CD8-positive, alpha-beta T cell (primary cell): ENCODE measurements at regions of chr17 and their contacts with region 1.

Region 1: GRCh38 chr17:31842183-31843069 is 16.6 kb downstream of the COPRS start:
- DNase-seq: peak; percentile 28 to 79 (median 59)
- ATAC-seq: peak; percentile 95
- H3K4me3 ChIP-seq: no peak overlapping the region
- H3K4me3 Mint-ChIP-seq: no peak overlapping the region
- H3K27ac ChIP-seq: no peak overlapping the region
- H3K27ac Mint-ChIP-seq: no peak overlapping the region
- H3K4me1 ChIP-seq: no peaks in the 10 kb centered on the region
- H3K4me1 Mint-ChIP-seq: no peaks in the 10 kb centered on the region
- H3K27me3 ChIP-seq: peaks cover 0 to 6% of the 10 kb centered on the region in 2 experiments
- H3K27me3 Mint-ChIP-seq: peaks cover 9% of the 10 kb centered on the region
- CTCF ChIP-seq: peak; percentile 94

Region 2: GRCh38 chr17:31373150-31374093 is 469.0 kb before region 1 on chr17:
- CTCF ChIA-PET with region 1: interaction called, 3 read pairs
- POLR2A ChIA-PET with region 1: no interaction called
- intact Hi-C with region 1: loop called in 1 of 2 experiments (anchors 5 kb)
- DNase-seq: peak in 3 of 9 experiments; percentile 29 to 76 (median 65)
- ATAC-seq: peak; percentile 84
- H3K4me3 ChIP-seq: no peak overlapping the region
- H3K4me3 Mint-ChIP-seq: no peak overlapping the region
- H3K27ac ChIP-seq: no peak overlapping the region
- H3K27ac Mint-ChIP-seq: no peak overlapping the region
- H3K4me1 ChIP-seq: no peaks in the 10 kb centered on the region
- H3K4me1 Mint-ChIP-seq: peaks cover 14% of the 10 kb centered on the region
- H3K27me3 ChIP-seq: no peaks in the 10 kb centered on the region
- H3K27me3 Mint-ChIP-seq: no peaks in the 10 kb centered on the region
- CTCF ChIP-seq: peak; percentile 91

Region 3: DNA sequence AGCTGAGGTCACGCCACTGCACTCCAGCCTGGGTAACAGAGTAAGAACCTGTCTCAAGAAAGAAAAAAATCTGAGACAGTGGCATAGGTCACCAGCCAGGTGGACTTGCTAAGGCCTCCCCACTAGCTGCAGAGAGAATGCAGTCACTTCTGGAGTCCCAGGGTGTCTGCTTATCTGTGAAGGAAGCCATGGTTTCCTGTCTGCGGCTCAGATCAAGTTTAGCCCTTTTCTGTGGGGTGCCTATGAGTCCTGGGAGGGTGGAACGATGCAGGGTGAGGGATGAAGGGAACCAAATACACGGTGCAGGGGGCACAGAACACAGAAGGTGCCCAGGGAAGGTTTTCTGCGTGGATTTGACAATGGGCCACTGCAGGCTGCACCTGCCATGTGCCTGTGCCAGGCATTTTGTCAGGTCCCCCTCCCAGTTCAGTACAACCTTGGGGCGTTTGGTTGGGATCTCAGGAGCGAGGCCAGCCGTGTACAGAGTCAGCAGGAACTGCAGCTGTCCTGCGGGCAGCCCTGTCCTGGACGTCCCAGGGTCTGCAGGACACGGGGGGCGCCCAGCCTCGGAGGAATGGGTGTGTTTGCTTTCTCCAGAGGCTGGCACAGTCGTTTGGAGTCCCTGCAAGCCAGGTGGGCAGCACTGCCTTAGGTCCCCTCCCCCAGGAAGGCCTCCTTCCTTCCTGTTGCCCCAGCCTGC is 409.2 kb before region 1 on chr17:
- CTCF ChIA-PET with region 1: interaction called, 34 read pairs
- POLR2A ChIA-PET with region 1: interaction called, 3 read pairs
- intact Hi-C with region 1: loop called in 1 of 2 experiments (anchors 1 kb)
- DNase-seq: peak; percentile 20 to 71 (median 55)
- ATAC-seq: peak; percentile 89
- H3K4me3 ChIP-seq: no peak overlapping the region
- H3K4me3 Mint-ChIP-seq: peak overlapping the region; percentile 62
- H3K27ac ChIP-seq: no peak overlapping the region
- H3K27ac Mint-ChIP-seq: peak overlapping the region; percentile 33
- H3K4me1 ChIP-seq: peaks cover 16% of the 10 kb centered on the region
- H3K4me1 Mint-ChIP-seq: peaks cover 20% of the 10 kb centered on the region
- H3K27me3 ChIP-seq: peaks cover 0 to 2% of the 10 kb centered on the region in 2 experiments
- H3K27me3 Mint-ChIP-seq: peaks cover 13% of the 10 kb centered on the region
- CTCF ChIP-seq: no peak

Region 4: DNA sequence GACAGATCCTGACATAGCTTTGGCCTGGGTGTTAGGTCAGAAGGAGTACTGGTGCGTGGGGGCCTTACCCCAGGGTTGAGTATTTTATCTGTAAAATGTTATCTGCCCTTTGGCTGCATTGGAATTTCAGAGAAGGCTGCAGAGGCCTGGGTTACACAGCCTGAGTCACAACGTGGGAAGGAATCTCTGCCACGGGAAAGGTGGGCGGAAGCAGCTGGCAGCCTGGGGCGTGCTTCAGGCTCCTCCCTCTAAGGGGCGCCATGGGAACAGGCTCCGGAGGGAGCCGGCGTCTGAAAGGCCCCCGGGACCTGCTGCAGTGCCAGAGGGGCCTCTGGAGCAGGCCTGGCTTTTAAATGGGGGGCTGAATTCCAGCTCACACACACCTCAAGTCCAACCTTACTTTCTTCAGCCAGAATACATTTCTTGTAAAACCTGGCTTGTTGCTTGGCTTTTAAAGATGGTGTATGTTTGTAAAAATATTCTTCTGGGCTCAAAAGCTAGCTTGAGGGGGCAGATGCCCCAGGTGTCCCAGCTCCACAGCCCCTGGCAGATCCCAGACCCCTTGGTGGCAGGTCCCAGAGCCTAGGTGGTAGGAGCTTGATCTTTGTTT is 308.8 kb before region 1 on chr17:
- CTCF ChIA-PET with region 1: interaction called, 19 read pairs
- POLR2A ChIA-PET with region 1: no interaction called
- intact Hi-C with region 1: loop called (anchors 2 to 5 kb)
- DNase-seq: peak in 1 of 9 experiments; percentile 35
- ATAC-seq: peak; percentile 15
- H3K4me3 ChIP-seq: no peak overlapping the region
- H3K4me3 Mint-ChIP-seq: no peak overlapping the region
- H3K27ac ChIP-seq: no peak overlapping the region
- H3K27ac Mint-ChIP-seq: no peak overlapping the region
- H3K4me1 ChIP-seq: peaks cover 11% of the 10 kb centered on the region
- H3K4me1 Mint-ChIP-seq: peaks cover 17% of the 10 kb centered on the region
- H3K27me3 ChIP-seq: no peaks in the 10 kb centered on the region
- H3K27me3 Mint-ChIP-seq: no peaks in the 10 kb centered on the region
- CTCF ChIP-seq: no peak

Region 5: GRCh38 chr17:31858642-31859473 is 16.4 kb after region 1 on chr17 and contains the start of gene COPRS:
- CTCF ChIA-PET with region 1: interaction called, 28 read pairs
- POLR2A ChIA-PET with region 1: no interaction called
- intact Hi-C with region 1: no loop called
- DNase-seq: peak; percentile 53 to 88 (median 77)
- ATAC-seq: peak; percentile 92
- H3K4me3 ChIP-seq: peak within 1 kb of the TSS; percentile 53 to 69
- H3K4me3 Mint-ChIP-seq: peak within 1 kb of the TSS; percentile 86
- H3K27ac ChIP-seq: no peak within 1 kb of the TSS
- H3K27ac Mint-ChIP-seq: peak within 1 kb of the TSS; percentile 15
- H3K4me1 ChIP-seq: peaks cover 14% of the 10 kb centered on the region
- H3K4me1 Mint-ChIP-seq: peaks cover 16% of the 10 kb centered on the region
- H3K27me3 ChIP-seq: no peaks in the 10 kb centered on the region
- H3K27me3 Mint-ChIP-seq: no peaks in the 10 kb centered on the region
- CTCF ChIP-seq: no peak
- total RNA-seq, gene COPRS: 2.4 to 2.6 TPM

Region 6: GRCh38 chr17:31900877-31901276 is 58.5 kb after region 1 on chr17:
- CTCF ChIA-PET with region 1: no interaction called
- POLR2A ChIA-PET with region 1: no interaction called
- intact Hi-C with region 1: no loop called
- DNase-seq: no peak
- ATAC-seq: no peak
- H3K4me3 ChIP-seq: peak overlapping the region; percentile 65 to 72
- H3K4me3 Mint-ChIP-seq: no peak overlapping the region
- H3K27ac ChIP-seq: peak overlapping the region; percentile 57 to 71
- H3K27ac Mint-ChIP-seq: no peak overlapping the region
- H3K4me1 ChIP-seq: peaks cover 10% of the 10 kb centered on the region
- H3K4me1 Mint-ChIP-seq: peaks cover 18% of the 10 kb centered on the region
- H3K27me3 ChIP-seq: no peaks in the 10 kb centered on the region
- H3K27me3 Mint-ChIP-seq: no peaks in the 10 kb centered on the region
- CTCF ChIP-seq: no peak

Region 7: GRCh38 chr17:32701871-32702270 is 859.4 kb after region 1 on chr17:
- CTCF ChIA-PET with region 1: no interaction called
- POLR2A ChIA-PET with region 1: no interaction called
- intact Hi-C with region 1: no loop called
- DNase-seq: no peak
- ATAC-seq: no peak
- H3K4me3 ChIP-seq: no peak overlapping the region
- H3K4me3 Mint-ChIP-seq: no peak overlapping the region
- H3K27ac ChIP-seq: no peak overlapping the region
- H3K27ac Mint-ChIP-seq: no peak overlapping the region
- H3K4me1 ChIP-seq: no peaks in the 10 kb centered on the region
- H3K4me1 Mint-ChIP-seq: no peaks in the 10 kb centered on the region
- H3K27me3 ChIP-seq: no peaks in the 10 kb centered on the region
- H3K27me3 Mint-ChIP-seq: no peaks in the 10 kb centered on the region
- CTCF ChIP-seq: no peak